HAP-1 (cell line): ENCODE measurements at regions of chr3 and their contacts with region 1.

Region 1: GRCh38 chr3:129942296-129942695 is 32.2 kb upstream of the TRH start:
- DNase-seq: peak; percentile 56 to 85
- H3K4me3 ChIP-seq: no peak overlapping the region
- H3K4me1 ChIP-seq: no peaks in the 10 kb centered on the region
- H3K27me3 ChIP-seq: no peaks in the 10 kb centered on the region

Region 2: GRCh38 chr3:129490242-129491045 is 451.9 kb before region 1 on chr3:
- in situ Hi-C with region 1: loop called (anchors 10 kb)
- DNase-seq: peak; percentile 83
- H3K4me3 ChIP-seq: no peak overlapping the region
- H3K4me1 ChIP-seq: no peaks in the 10 kb centered on the region; the same call in 1 of the 2 replicates
- H3K27me3 ChIP-seq: no peaks in the 10 kb centered on the region

Region 3: DNA sequence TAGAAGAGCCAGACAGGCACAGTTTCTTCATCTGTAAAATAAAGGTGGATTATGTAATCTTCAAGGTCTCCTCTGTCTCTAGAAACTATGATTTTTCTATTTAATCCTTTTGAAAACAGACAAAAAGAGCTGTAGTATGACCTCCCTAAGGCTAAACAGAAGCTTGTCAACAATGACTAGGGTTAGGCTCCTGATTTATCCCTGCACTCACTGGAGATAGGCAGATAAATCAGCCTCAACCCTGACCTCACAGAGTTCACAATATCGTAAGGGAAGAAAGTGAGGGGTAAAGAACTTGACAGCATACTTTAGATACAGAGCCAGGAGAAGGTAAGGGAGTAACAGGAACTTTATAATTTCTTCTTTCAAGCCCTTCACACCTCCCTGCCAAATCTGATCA is 173.6 kb before region 1 on chr3:
- in situ Hi-C with region 1: no loop called
- DNase-seq: peak; percentile 36 to 73
- H3K4me3 ChIP-seq: no peak overlapping the region
- H3K4me1 ChIP-seq: peaks cover 18% of the 10 kb centered on the region
- H3K27me3 ChIP-seq: no peaks in the 10 kb centered on the region

Region 4: DNA sequence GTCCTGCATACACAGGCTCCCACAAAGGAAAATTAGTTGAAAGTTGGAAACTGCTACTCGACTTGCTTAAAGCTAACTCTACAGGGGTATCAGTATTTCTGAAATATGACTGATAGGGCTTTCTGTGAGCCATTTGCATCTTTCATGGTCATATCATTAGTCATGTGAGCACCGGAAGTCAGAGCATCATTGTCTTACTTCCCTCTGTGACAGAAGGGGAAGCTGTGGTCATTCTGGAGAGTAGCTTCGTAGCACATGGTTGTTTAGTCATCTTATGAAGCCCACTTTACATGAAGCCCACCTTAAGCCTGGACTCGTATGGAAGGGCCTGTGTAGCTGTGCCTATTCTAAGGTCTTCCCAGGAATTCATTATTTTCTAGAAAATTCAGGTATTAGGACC is 472.2 kb after region 1 on chr3:
- in situ Hi-C with region 1: no loop called
- DNase-seq: no peak
- H3K4me3 ChIP-seq: no peak overlapping the region
- H3K4me1 ChIP-seq: no peaks in the 10 kb centered on the region
- H3K27me3 ChIP-seq: no peaks in the 10 kb centered on the region